Common myeloid progenitor, CD34-positive (primary cell): ENCODE measurements at regions of chr14 and their contacts with region 1.

Region 1: GRCh38 chr14:74257078-74257989 is 18.1 kb downstream of the VSX2 start:
- DNase-seq: peak in 2 of 3 donors; percentile 61 to 69
- H3K4me3 ChIP-seq: peak overlapping the region in 6 of 7 experiments; percentile 56 to 75 (median 66)
- H3K27ac ChIP-seq: no peak overlapping the region
- H3K4me1 ChIP-seq: peaks cover 0 to 15% (median 14%) of the 10 kb centered on the region in 4 experiments
- H3K27me3 ChIP-seq: peaks cover 6 to 28% (median 12%) of the 10 kb centered on the region in 5 experiments

Region 2: GRCh38 chr14:74109369-74109768 is 148.0 kb before region 1 on chr14:
- CTCF ChIA-PET with region 1: interaction called, 10 read pairs
- POLR2A ChIA-PET with region 1: no interaction called
- DNase-seq: no peak
- H3K4me3 ChIP-seq: no peak overlapping the region
- H3K27ac ChIP-seq: no peak overlapping the region
- H3K4me1 ChIP-seq: no peaks in the 10 kb centered on the region
- H3K27me3 ChIP-seq: no peaks in the 10 kb centered on the region

Region 3: DNA sequence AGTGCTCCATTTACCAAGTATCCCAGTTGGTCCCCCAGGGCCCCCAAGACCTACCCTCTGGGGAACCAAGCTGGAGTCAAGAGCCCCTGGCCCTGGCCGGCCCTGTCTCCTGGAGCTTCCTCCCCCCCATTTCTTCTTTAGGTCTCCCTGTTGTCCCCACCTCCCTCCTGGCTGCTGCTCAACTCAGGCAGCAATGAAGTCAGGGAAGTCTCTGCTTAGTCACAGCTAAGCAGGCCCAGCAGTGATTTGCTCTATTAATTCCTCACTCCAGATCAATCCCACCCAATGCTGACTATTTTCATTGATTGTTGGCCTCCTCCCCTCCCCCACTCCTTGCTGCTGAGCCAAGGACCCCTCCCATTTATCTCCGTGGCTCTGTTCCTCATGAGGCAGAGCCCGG is 10.3 kb after region 1 on chr14:
- CTCF ChIA-PET with region 1: interaction called, 14 read pairs
- POLR2A ChIA-PET with region 1: interaction called, 4 read pairs
- DNase-seq: no peak
- H3K4me3 ChIP-seq: no peak overlapping the region
- H3K27ac ChIP-seq: no peak overlapping the region
- H3K4me1 ChIP-seq: no peaks in the 10 kb centered on the region
- H3K27me3 ChIP-seq: peaks cover 0 to 11% (median 0%) of the 10 kb centered on the region in 5 experiments